Activated CD4-positive, alpha-beta T cell treated with anti-CD3 and anti-CD28 coated beads for 36 hours (primary cell): ENCODE measurements at regions of chr1 and their contacts with region 1.

Region 1: DNA sequence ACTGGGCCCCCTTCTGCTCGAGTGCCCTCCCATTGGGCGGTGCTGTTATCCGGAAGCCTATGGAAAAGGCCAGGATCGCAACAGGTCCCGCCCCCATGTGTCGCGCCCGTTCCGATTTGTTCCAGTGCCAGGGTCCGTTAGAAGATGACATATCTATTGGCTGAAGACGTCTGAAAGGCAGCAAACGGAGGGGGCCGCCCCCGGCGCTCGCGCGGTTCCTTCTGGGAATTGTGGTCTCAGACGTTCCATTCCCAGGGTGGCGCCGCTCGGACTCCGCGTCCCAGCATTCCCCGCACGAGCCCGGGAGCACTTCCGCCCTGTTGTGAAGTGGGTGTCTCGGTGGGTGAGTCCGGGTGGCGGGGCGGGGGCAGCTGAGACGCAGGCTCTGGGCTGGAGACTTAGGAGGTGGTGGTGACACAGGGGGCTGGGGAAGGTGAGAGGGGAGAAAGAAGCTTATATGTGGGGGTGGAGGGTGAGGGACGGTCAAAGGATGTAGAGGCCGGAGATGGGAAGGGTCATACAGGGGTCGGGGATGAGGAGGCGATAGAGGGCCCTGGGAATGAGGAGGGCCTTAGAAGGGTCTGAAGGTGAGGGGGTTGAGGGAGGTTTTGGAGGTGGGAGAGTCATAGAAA is at the start of gene ZSCAN20:
- DNase-seq: peak; percentile 94
- ATAC-seq: peak; percentile 97
- H3K4me3 Mint-ChIP-seq: peak within 1 kb of the TSS; percentile 81
- H3K27ac Mint-ChIP-seq: peak within 1 kb of the TSS; percentile 71
- H3K4me1 Mint-ChIP-seq: peaks cover 23% of the 10 kb centered on the region
- H3K27me3 Mint-ChIP-seq: no peaks in the 10 kb centered on the region
- total RNA-seq, gene ZSCAN20: 3.4 to 5.4 TPM

Region 2: GRCh38 chr1:33094971-33095604 is 377.4 kb before region 1 on chr1:
- CTCF ChIA-PET with region 1: no interaction called
- POLR2A ChIA-PET with region 1: no interaction called
- intact Hi-C with region 1: loop called in 1 of 2 experiments (anchors 5 kb)
- DNase-seq: peak; percentile 44
- ATAC-seq: no peak
- H3K4me3 Mint-ChIP-seq: no peak overlapping the region
- H3K27ac Mint-ChIP-seq: no peak overlapping the region
- H3K4me1 Mint-ChIP-seq: peaks cover 27% of the 10 kb centered on the region
- H3K27me3 Mint-ChIP-seq: no peaks in the 10 kb centered on the region

Region 3: DNA sequence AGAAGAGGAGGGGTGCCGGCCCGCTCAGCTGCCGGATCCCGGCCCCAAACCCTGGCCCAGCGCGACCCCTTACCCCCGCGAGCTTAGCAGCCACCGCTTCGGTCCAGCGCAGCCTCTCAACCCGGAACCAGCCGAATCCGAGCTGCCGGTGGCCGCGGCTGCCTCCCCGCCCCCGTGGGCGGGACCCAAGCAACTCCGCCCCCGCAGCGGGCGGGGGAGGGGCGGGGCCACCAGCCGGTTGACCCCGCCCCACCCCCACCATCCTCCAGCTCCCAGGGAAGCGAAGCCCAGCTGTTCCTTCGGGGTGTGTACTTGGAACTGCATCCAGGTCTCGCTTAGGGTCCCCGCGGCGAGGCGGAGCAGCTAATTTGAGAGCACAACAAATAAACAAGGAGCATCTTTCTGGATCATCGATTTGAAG is 290.5 kb before region 1 on chr1 and contains the start of gene TRIM62:
- CTCF ChIA-PET with region 1: no interaction called
- POLR2A ChIA-PET with region 1: no interaction called
- intact Hi-C with region 1: loop called in 1 of 2 experiments (anchors 1 kb)
- DNase-seq: peak; percentile 84
- ATAC-seq: peak; percentile 35
- H3K4me3 Mint-ChIP-seq: peak within 1 kb of the TSS; percentile 79
- H3K27ac Mint-ChIP-seq: peak within 1 kb of the TSS; percentile 74
- H3K4me1 Mint-ChIP-seq: peaks cover 25% of the 10 kb centered on the region
- H3K27me3 Mint-ChIP-seq: peaks cover 5% of the 10 kb centered on the region
- total RNA-seq, gene TRIM62: 3.6 to 3.7 TPM

Region 4: GRCh38 chr1:33295450-33296081 is 176.9 kb before region 1 on chr1:
- CTCF ChIA-PET with region 1: interaction called, 40 read pairs
- POLR2A ChIA-PET with region 1: no interaction called
- intact Hi-C with region 1: loop called (anchors 1 kb)
- DNase-seq: peak; percentile 93
- ATAC-seq: peak; percentile 93
- H3K4me3 Mint-ChIP-seq: no peak overlapping the region
- H3K27ac Mint-ChIP-seq: no peak overlapping the region
- H3K4me1 Mint-ChIP-seq: peaks cover 2% of the 10 kb centered on the region
- H3K27me3 Mint-ChIP-seq: no peaks in the 10 kb centered on the region

Region 5: GRCh38 chr1:33367485-33368405 is 104.7 kb before region 1 on chr1:
- CTCF ChIA-PET with region 1: no interaction called
- POLR2A ChIA-PET with region 1: no interaction called
- intact Hi-C with region 1: loop called (anchors 2 to 5 kb)
- DNase-seq: peak; percentile 93
- ATAC-seq: peak; percentile 96
- H3K4me3 Mint-ChIP-seq: no peak overlapping the region
- H3K27ac Mint-ChIP-seq: no peak overlapping the region
- H3K4me1 Mint-ChIP-seq: peaks cover 2% of the 10 kb centered on the region
- H3K27me3 Mint-ChIP-seq: no peaks in the 10 kb centered on the region

Region 6: DNA sequence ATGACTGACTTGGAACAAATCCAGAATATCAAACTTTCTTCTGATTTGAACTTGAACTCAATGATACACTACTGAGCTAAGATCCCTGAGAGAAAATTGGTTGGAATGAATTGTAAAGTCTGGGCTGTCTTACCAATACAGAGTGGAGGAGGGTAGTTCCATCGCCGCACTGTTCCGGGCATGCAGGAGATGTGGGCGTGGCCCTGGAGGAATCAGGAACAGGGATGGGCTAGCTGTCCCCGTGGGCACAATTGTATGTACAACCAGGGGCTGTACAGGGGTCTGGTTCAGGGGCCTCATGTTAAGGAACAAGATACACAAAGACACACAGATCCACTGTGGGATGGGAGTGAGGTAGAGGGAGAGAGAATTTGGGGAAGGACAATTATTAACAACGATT is 144.3 kb after region 1 on chr1:
- CTCF ChIA-PET with region 1: interaction called, 4 read pairs
- POLR2A ChIA-PET with region 1: no interaction called
- intact Hi-C with region 1: loop called in 1 of 2 experiments (anchors 2 kb)
- DNase-seq: no peak
- ATAC-seq: no peak
- H3K4me3 Mint-ChIP-seq: no peak overlapping the region
- H3K27ac Mint-ChIP-seq: no peak overlapping the region
- H3K4me1 Mint-ChIP-seq: peaks cover 3% of the 10 kb centered on the region
- H3K27me3 Mint-ChIP-seq: peaks cover 40% of the 10 kb centered on the region